CD8-positive, alpha-beta T cell (primary cell): ENCODE measurements at regions of chr2 and their contacts with region 1.

Region 1: DNA sequence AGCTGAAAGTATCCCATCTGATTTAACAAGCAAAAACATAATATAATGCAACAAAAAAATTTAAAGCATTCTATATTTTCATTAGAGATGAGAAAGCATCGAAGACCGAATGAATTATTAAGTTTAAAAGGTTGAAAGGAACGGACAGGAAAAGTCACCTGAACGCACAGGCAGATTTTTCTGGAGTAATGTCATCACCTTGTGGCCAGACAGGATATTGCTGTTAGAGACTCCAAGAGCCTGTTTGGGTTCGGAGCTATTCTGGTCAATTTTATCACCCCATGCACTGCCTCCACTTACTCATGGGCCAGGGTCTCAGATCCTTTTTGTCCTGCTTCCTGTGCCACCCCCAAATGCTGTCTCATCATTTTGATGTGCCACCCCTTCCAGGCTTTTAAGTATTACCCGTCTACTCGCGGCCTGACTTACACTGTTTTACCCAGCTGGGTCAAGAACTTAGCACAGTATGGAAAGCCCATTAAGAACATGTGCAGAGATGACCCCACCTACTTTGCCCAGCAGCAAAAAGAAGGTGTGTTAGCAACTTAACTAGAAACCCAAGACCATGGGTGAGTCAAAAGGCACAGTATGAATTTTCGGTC is 27.3 kb downstream of the GKN2 start:
- DNase-seq: peak; percentile 18 to 80 (median 56)
- ATAC-seq: peak; percentile 87
- H3K4me3 ChIP-seq: no peak overlapping the region
- H3K4me3 Mint-ChIP-seq: no peak overlapping the region
- H3K27ac ChIP-seq: no peak overlapping the region
- H3K27ac Mint-ChIP-seq: no peak overlapping the region
- H3K4me1 ChIP-seq: no peaks in the 10 kb centered on the region
- H3K4me1 Mint-ChIP-seq: no peaks in the 10 kb centered on the region
- H3K27me3 ChIP-seq: no peaks in the 10 kb centered on the region
- H3K27me3 Mint-ChIP-seq: peaks cover 2% of the 10 kb centered on the region
- CTCF ChIP-seq: peak; percentile 98

Region 2: DNA sequence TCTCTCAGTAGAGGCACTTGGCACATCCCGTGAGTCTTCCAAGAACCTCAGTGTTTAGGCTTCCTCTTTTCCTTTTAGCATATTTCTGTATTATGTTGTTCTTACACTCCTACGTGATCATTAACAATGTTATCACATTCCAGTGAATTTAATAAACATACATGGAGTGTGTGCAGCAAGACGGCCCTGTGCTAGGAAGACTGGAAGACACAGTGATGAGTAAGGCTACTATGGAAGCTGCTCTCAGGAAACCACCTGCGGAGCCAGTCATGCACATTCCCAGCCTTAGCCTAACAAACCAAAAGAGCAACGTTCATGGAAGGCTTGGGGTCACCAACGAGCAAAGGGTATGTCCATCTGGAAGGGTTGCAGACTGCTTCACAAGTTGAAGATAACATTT is 1424.9 kb before region 1 on chr2:
- CTCF ChIA-PET with region 1: no interaction called
- POLR2A ChIA-PET with region 1: no interaction called
- intact Hi-C with region 1: no loop called
- DNase-seq: no peak
- ATAC-seq: no peak
- H3K4me3 ChIP-seq: no peak overlapping the region
- H3K4me3 Mint-ChIP-seq: no peak overlapping the region
- H3K27ac ChIP-seq: no peak overlapping the region
- H3K27ac Mint-ChIP-seq: no peak overlapping the region
- H3K4me1 ChIP-seq: no peaks in the 10 kb centered on the region
- H3K4me1 Mint-ChIP-seq: no peaks in the 10 kb centered on the region
- H3K27me3 ChIP-seq: no peaks in the 10 kb centered on the region
- H3K27me3 Mint-ChIP-seq: peaks cover 2% of the 10 kb centered on the region
- CTCF ChIP-seq: no peak

Region 3: DNA sequence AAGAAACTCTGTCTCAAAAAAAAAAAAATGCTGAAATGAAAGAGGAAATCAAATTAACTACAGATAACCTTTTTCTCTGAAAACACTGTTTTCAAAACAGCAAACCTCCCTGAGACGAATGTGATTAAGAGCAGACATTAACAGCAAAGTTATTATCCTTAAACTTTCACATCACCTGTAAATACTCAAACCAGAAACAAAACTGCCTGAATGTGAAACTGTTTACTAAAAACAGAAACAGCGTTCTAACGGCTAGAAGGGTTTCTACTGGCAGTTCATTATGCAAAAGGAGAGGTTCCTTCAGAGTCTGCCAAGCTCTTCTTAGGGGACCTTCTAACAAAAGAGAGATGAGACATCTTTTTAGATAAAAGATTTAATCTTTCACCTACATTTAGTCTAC is 721.8 kb before region 1 on chr2:
- CTCF ChIA-PET with region 1: no interaction called
- POLR2A ChIA-PET with region 1: no interaction called
- intact Hi-C with region 1: no loop called
- DNase-seq: peak in 2 of 9 experiments; percentile 17 to 44
- ATAC-seq: peak; percentile 55
- H3K4me3 ChIP-seq: no peak overlapping the region
- H3K4me3 Mint-ChIP-seq: peak overlapping the region; percentile 76
- H3K27ac ChIP-seq: peak overlapping the region in 1 of 2 experiments; percentile 55
- H3K27ac Mint-ChIP-seq: peak overlapping the region; percentile 88
- H3K4me1 ChIP-seq: peaks cover 50% of the 10 kb centered on the region
- H3K4me1 Mint-ChIP-seq: peaks cover 80% of the 10 kb centered on the region
- H3K27me3 ChIP-seq: no peaks in the 10 kb centered on the region
- H3K27me3 Mint-ChIP-seq: no peaks in the 10 kb centered on the region
- CTCF ChIP-seq: no peak

Region 4: GRCh38 chr2:68452168-68452900 is 473.1 kb before region 1 on chr2:
- CTCF ChIA-PET with region 1: interaction called, 10 read pairs
- POLR2A ChIA-PET with region 1: no interaction called
- intact Hi-C with region 1: no loop called
- DNase-seq: peak in 2 of 9 experiments; percentile 44 to 68
- ATAC-seq: peak; percentile 52
- H3K4me3 ChIP-seq: no peak overlapping the region
- H3K4me3 Mint-ChIP-seq: no peak overlapping the region
- H3K27ac ChIP-seq: no peak overlapping the region
- H3K27ac Mint-ChIP-seq: no peak overlapping the region
- H3K4me1 ChIP-seq: peaks cover 19% of the 10 kb centered on the region
- H3K4me1 Mint-ChIP-seq: peaks cover 18% of the 10 kb centered on the region
- H3K27me3 ChIP-seq: no peaks in the 10 kb centered on the region
- H3K27me3 Mint-ChIP-seq: no peaks in the 10 kb centered on the region
- CTCF ChIP-seq: no peak

Region 5: DNA sequence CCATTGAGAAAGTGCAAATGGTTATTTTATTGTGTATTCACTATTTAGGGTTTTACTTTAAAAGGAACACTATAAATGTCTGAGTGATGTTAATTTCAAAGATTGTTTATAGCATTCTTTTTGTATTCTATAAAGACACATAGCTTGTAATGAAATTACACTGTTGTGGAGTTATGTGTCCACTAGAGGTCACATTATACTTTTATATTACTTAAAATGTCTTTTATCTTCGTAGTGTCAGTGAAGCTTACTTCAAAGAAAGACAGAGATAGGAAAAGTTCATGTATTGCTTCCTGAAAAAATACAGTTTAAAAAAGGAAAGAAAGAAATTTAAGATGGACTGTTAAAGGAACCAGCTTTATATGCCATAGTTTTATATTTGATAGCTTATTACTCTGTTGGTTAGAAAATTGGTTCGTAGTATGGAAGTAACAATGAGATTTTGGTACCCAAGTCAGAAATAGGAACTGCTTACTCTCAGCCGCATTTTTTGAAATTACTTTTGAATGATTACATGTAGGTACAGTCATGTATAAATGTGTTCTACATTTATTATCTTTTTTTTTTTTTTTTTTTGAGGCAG is 437.5 kb before region 1 on chr2:
- CTCF ChIA-PET with region 1: interaction called, 23 read pairs
- POLR2A ChIA-PET with region 1: no interaction called
- intact Hi-C with region 1: loop called (anchors 1 kb)
- DNase-seq: peak in 2 of 9 experiments; percentile 36 to 54
- ATAC-seq: peak; percentile 71
- H3K4me3 ChIP-seq: no peak overlapping the region
- H3K4me3 Mint-ChIP-seq: no peak overlapping the region
- H3K27ac ChIP-seq: no peak overlapping the region
- H3K27ac Mint-ChIP-seq: no peak overlapping the region
- H3K4me1 ChIP-seq: no peaks in the 10 kb centered on the region
- H3K4me1 Mint-ChIP-seq: peaks cover 3% of the 10 kb centered on the region
- H3K27me3 ChIP-seq: no peaks in the 10 kb centered on the region
- H3K27me3 Mint-ChIP-seq: no peaks in the 10 kb centered on the region
- CTCF ChIP-seq: peak; percentile 65

Region 6: DNA sequence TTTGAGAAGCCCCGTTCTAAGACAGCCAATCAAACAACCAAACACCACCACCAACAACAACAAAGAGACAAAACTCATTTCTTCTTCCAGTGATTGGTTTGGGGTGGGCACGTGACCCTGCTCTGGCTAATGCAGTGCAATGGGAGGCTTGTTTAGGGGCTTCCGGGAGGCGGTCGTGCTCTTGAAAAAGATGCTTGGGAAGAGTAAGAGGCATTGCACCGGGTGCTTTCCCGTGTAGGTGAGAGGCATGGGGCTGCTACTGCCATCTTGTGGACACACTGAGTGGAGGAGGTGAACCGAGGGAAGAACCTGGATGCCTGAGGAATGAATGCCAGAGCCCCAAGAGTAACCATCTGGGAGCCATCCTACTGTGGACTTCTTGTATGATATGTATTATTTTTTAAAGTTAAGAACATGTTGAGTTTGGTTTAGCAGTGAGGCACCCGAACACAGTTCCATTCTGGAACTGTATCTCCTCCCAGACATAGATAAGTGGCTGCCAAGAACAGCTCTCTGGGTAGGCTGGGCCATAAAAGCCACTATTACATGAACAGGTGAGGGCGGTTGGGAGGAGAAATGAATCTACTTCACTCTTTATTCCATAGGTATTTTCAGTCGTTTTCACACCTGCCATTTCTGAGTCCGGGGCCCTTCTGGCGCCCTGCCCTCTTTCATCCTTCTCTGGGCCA is 209.9 kb before region 1 on chr2:
- CTCF ChIA-PET with region 1: interaction called, 155 read pairs
- POLR2A ChIA-PET with region 1: no interaction called
- intact Hi-C with region 1: no loop called
- DNase-seq: peak in 6 of 9 experiments; percentile 16 to 79 (median 60)
- ATAC-seq: peak; percentile 47
- H3K4me3 ChIP-seq: no peak overlapping the region
- H3K4me3 Mint-ChIP-seq: no peak overlapping the region
- H3K27ac ChIP-seq: no peak overlapping the region
- H3K27ac Mint-ChIP-seq: peak overlapping the region; percentile 11
- H3K4me1 ChIP-seq: peaks cover 53% of the 10 kb centered on the region
- H3K4me1 Mint-ChIP-seq: peaks cover 62% of the 10 kb centered on the region
- H3K27me3 ChIP-seq: peaks cover 0 to 3% of the 10 kb centered on the region in 2 experiments
- H3K27me3 Mint-ChIP-seq: no peaks in the 10 kb centered on the region
- CTCF ChIP-seq: no peak

Region 7: GRCh38 chr2:68837164-68837860 is 88.1 kb before region 1 on chr2:
- CTCF ChIA-PET with region 1: interaction called, 24 read pairs
- POLR2A ChIA-PET with region 1: no interaction called
- intact Hi-C with region 1: loop called (anchors 1 kb)
- DNase-seq: peak; percentile 39 to 83 (median 73)
- ATAC-seq: peak; percentile 74
- H3K4me3 ChIP-seq: no peak overlapping the region
- H3K4me3 Mint-ChIP-seq: no peak overlapping the region
- H3K27ac ChIP-seq: no peak overlapping the region
- H3K27ac Mint-ChIP-seq: no peak overlapping the region
- H3K4me1 ChIP-seq: peaks cover 8% of the 10 kb centered on the region
- H3K4me1 Mint-ChIP-seq: peaks cover 23% of the 10 kb centered on the region
- H3K27me3 ChIP-seq: no peaks in the 10 kb centered on the region
- H3K27me3 Mint-ChIP-seq: no peaks in the 10 kb centered on the region
- CTCF ChIP-seq: peak; percentile 82

Region 8: GRCh38 chr2:68936427-68936826 is 11.0 kb after region 1 on chr2:
- CTCF ChIA-PET with region 1: interaction called, 35 read pairs
- POLR2A ChIA-PET with region 1: interaction called, 5 read pairs
- intact Hi-C with region 1: no loop called
- DNase-seq: no peak
- ATAC-seq: no peak
- H3K4me3 ChIP-seq: no peak overlapping the region
- H3K4me3 Mint-ChIP-seq: no peak overlapping the region
- H3K27ac ChIP-seq: no peak overlapping the region
- H3K27ac Mint-ChIP-seq: no peak overlapping the region
- H3K4me1 ChIP-seq: no peaks in the 10 kb centered on the region
- H3K4me1 Mint-ChIP-seq: no peaks in the 10 kb centered on the region
- H3K27me3 ChIP-seq: peaks cover 0 to 2% of the 10 kb centered on the region in 2 experiments
- H3K27me3 Mint-ChIP-seq: peaks cover 7% of the 10 kb centered on the region
- CTCF ChIP-seq: no peak